ENCODE measurements at regions of chr1 and their contacts with region 1.

Region 1: DNA sequence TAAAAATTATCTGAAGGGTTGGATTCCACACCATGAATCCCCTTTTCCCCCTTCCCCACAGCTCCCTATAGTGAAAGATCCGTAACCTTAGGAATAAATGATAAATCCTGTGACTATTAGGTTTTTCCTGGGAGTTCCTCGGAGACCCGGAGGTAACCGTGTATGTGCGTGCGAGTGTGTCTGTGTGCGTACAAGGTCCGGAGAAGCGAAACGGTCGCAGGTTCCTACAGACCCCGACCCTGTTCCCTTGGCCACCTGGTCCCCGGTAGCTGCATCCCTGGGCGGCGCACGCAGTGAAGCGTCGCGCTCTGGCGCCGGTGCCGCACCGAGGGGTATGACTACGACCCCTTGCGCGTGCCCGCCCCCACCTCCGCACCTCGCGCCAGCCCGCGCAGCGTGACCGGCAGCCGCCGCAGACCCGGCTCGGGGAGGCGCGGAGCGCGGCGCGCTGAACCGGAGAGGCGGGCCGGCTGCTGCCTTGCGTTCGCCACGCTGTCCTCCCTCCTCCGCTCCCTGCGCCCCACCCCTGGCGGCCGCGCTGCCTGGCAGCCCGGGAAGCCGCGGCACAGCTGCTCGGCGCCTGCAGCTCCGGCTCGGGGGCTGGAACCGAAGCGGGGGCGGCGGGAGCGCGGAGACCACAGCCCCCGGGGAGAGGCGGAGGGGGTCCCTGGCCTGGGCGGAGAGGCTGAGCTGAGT is at the start of gene AK5:
- DNase-seq: peak in 1 of 2 donors; percentile 32
- ATAC-seq: peak; percentile 56 to 88 (median 66)
- H3K4me3 ChIP-seq: peak within 1 kb of the TSS in 9 of 10 donors; percentile 37 to 60 (median 55)
- H3K27ac ChIP-seq: no peak within 1 kb of the TSS
- H3K4me1 ChIP-seq: peaks cover 0 to 19% (median 9%) of the 10 kb centered on the region in 9 donors
- H3K27me3 ChIP-seq: peaks cover 0 to 86% (median 52%) of the 10 kb centered on the region in 7 donors
- CTCF ChIP-seq: no peak
- total RNA-seq, gene AK5: 0.30 to 1.7 (median 0.97) TPM

Region 2: GRCh38 chr1:77310924-77311323 is 29.3 kb after region 1 on chr1:
- intact Hi-C with region 1: loop called in 1 of 10 experiments (anchors 2 kb)
- DNase-seq: no peak
- ATAC-seq: no peak
- H3K4me3 ChIP-seq: no peak overlapping the region
- H3K27ac ChIP-seq: no peak overlapping the region
- H3K4me1 ChIP-seq: no peaks in the 10 kb centered on the region
- H3K27me3 ChIP-seq: no peaks in the 10 kb centered on the region
- CTCF ChIP-seq: no peak